ENCODE measurements at regions of chr14 and their contacts with region 1.

Region 1: DNA sequence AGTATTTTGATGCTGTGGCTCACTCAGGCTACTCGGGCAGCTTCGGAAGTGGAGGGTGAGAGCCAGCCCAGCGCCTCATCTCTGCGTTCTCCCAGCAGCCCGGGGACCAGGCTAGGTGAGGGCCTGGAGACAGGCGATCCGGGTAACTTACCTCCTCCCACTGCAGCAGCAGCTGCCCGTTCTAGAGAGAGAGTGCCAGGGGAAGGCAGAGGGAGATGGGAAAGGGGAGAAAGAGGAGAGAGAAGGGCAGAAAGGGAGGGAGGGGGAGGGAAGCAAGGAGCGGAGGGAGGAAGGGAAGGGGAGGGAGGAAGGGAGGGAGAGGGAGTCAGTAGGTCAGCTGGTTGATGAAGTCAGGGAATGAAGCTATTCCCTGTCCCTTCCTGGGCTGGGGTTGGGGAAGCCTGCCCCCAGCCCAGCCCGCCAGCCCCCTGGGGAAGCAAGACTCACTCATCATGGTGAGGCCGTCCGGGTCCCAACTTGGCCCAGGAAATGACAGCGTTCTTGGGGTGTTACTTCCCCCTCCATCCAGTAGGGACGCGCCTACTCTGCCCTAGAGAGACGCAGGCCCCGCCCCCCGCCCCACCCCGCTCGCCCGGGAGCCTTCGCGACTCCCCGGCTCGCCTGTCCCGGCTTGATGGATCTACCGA is at the start of gene IFI27L2:
- DNase-seq: peak; percentile 88
- H3K4me3 Mint-ChIP-seq: peak within 1 kb of the TSS; percentile 88
- H3K27ac Mint-ChIP-seq: peak within 1 kb of the TSS; percentile 68
- H3K4me1 Mint-ChIP-seq: peaks cover 16% of the 10 kb centered on the region
- H3K27me3 Mint-ChIP-seq: no peaks in the 10 kb centered on the region
- total RNA-seq, gene IFI27L2: 67.0 to 73.4 TPM

Region 2: GRCh38 chr14:93591506-93591905 is 537.7 kb before region 1 on chr14:
- CTCF ChIA-PET with region 1: no interaction called
- intact Hi-C with region 1: no loop called
- DNase-seq: no peak
- H3K4me3 Mint-ChIP-seq: no peak overlapping the region
- H3K27ac Mint-ChIP-seq: no peak overlapping the region
- H3K4me1 Mint-ChIP-seq: no peaks in the 10 kb centered on the region
- H3K27me3 Mint-ChIP-seq: peaks cover 15% of the 10 kb centered on the region

Region 3: GRCh38 chr14:93959239-93960107 is 169.8 kb before region 1 on chr14:
- CTCF ChIA-PET with region 1: no interaction called
- intact Hi-C with region 1: no loop called
- DNase-seq: peak; percentile 98
- H3K4me3 Mint-ChIP-seq: peak overlapping the region; percentile 68
- H3K27ac Mint-ChIP-seq: peak overlapping the region; percentile 99
- H3K4me1 Mint-ChIP-seq: peaks cover 95% of the 10 kb centered on the region
- H3K27me3 Mint-ChIP-seq: no peaks in the 10 kb centered on the region

Region 4: GRCh38 chr14:94026173-94026888 is 102.9 kb before region 1 on chr14 and contains the start of gene OTUB2:
- CTCF ChIA-PET with region 1: interaction called, 4 read pairs
- intact Hi-C with region 1: loop called (anchors 1 kb)
- DNase-seq: peak; percentile 99
- H3K4me3 Mint-ChIP-seq: peak within 1 kb of the TSS; percentile 68
- H3K27ac Mint-ChIP-seq: no peak within 1 kb of the TSS
- H3K4me1 Mint-ChIP-seq: peaks cover 34% of the 10 kb centered on the region
- H3K27me3 Mint-ChIP-seq: no peaks in the 10 kb centered on the region
- total RNA-seq, gene OTUB2: 1.6 to 1.7 TPM

Region 5: GRCh38 chr14:94143239-94143638 is 14.0 kb after region 1 on chr14:
- CTCF ChIA-PET with region 1: interaction called, 38 read pairs
- intact Hi-C with region 1: no loop called
- DNase-seq: peak; percentile 36
- H3K4me3 Mint-ChIP-seq: no peak overlapping the region
- H3K27ac Mint-ChIP-seq: no peak overlapping the region
- H3K4me1 Mint-ChIP-seq: peaks cover 12% of the 10 kb centered on the region
- H3K27me3 Mint-ChIP-seq: no peaks in the 10 kb centered on the region

Region 6: DNA sequence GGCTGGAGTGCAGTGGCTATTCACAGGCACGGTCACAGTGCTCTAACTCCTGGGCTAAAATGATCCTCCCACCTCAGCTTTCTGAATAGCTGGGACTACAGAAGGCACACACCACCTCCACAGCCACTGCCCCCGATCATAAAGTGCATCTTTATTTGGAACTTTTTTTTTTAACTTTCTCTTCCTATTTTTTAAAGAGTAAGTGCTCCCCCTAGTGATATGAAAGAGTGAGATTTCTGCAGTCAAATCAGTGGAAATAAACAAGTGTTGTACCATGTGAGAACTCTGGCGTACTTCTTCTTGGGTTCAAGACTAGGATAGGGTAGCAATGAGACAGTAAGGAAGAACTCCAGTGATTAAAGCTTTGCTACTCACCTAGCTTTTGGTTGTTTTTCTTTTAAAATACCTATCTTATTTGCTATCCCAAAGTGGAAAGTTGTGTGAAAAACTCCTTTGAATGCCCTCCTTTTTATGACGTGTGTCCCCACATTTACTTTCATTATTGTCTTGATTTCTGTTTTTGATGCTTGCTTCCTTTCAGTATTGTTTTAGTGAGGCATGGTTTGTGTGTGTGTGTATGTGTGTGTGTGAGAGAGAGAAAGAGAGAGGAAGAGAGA is 51.5 kb after region 1 on chr14:
- CTCF ChIA-PET with region 1: interaction called, 82 read pairs
- intact Hi-C with region 1: loop called (anchors 1 kb)
- DNase-seq: no peak
- H3K4me3 Mint-ChIP-seq: peak overlapping the region; percentile 31
- H3K27ac Mint-ChIP-seq: peak overlapping the region; percentile 9
- H3K4me1 Mint-ChIP-seq: peaks cover 45% of the 10 kb centered on the region
- H3K27me3 Mint-ChIP-seq: no peaks in the 10 kb centered on the region

Region 7: DNA sequence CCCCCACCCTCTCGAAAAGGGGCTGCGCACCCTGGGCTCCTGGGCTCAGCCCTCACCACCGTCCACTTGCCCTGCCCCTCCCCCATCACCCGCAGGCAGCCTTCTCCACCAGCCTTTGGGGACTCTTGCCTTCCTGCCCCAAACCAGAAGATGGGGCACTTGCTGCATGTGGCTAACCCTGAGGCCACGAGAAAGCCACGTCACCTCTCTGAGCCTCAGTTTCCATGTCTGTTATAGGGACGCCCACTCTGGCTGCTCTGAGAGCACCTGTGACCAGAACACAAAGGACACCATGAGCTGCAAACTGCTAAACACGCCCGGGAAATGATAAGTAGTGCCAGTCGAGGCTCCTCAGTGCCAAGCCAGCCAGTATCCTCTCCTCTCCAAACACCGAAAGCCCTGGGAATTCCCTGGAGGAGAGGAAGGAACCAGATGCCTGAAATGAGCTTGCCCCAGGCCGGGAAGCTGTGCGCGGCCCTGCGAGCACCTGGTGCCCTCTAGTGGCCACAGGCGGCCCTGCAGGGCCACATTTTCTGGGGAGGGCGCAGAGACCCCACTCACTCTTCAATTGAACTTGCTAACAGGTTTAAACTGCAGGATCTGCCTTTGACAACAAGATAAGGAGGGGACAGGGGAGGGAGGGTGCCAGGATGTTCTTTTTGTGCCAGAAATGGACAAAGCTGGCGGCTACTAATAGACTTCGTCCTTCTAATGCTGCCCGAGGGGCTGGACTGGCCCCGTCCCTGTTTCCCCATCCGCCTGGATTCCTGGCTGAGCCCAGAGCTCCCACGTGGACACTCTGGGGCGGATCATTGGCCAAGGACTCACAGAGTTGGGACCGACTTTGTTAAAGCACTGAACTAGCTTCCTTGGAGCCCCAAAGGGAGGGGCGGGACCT is 357.0 kb after region 1 on chr14:
- CTCF ChIA-PET with region 1: interaction called, 31 read pairs
- intact Hi-C with region 1: loop called (anchors 1 kb)
- DNase-seq: peak; percentile 52
- H3K4me3 Mint-ChIP-seq: no peak overlapping the region
- H3K27ac Mint-ChIP-seq: no peak overlapping the region
- H3K4me1 Mint-ChIP-seq: peaks cover 4% of the 10 kb centered on the region
- H3K27me3 Mint-ChIP-seq: peaks cover 21% of the 10 kb centered on the region